ENCODE measurements at regions of chr3 and their contacts with region 1.

Region 1: DNA sequence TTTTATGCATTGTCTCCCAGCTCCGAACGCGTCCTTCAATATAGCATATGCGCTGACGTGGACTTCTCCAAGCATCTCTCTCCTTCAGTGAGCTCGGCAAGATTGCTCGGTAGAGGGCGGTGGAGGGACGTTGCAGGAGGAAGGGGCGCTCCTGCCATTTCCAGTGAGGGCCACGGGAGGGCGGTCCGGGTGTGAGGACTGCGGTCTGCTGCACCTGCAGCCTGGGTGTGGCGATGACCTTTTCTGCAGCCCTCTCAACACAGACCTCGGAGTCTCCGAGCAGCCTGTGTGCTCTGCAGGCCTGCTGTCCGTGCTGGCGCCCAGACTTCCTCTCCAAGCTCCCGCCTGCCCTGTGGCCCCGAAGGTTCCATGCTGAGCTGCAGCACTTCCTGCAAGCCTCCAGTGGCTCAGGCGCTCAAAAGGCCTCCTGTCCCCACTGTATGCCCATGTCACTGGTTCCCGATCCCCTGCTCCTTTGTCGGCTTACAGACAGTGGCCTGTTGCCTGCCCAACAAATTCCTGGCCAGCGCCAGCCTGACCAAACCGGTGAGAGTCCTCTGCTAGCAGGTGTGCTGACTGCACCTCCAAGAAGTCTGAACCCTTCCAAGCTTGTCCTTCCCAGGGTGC is 8.9 kb upstream of the RTP3 start:
- DNase-seq: peak; percentile 81 to 94 (median 85)
- H3K4me3 ChIP-seq: peak overlapping the region; percentile 23
- H3K4me3 Mint-ChIP-seq: peak overlapping the region in 6 of 7 donors; percentile 62 to 81 (median 69)
- H3K27ac ChIP-seq: no peak overlapping the region
- H3K27ac Mint-ChIP-seq: peak overlapping the region in 3 of 8 donors; percentile 40 to 73 (median 61)
- H3K4me1 ChIP-seq: peaks cover 12% of the 10 kb centered on the region
- H3K4me1 Mint-ChIP-seq: peaks cover 16 to 33% (median 23%) of the 10 kb centered on the region in 3 donors
- H3K27me3 ChIP-seq: no peaks in the 10 kb centered on the region
- H3K27me3 Mint-ChIP-seq: peaks cover 0 to 2% of the 10 kb centered on the region in 2 donors

Region 2: DNA sequence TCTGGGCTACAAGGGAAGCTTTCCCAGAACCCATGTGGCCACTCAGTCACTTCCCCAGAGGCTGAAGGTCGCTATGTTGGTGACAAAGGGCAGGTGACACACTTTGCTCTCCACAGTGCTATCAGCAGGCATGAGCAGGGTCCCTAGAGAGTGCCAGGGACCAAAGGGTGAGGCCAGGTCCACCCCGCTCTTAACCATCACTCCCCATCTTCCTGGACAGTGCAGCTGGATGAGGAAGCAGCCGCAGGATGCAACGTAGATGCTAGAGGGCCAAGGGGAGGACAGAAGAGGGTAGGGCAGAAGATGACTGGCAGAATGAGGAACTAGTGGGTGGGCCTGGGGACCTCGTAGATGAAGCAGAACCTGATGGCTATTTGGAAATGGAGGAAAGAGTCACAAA is 10.5 kb before region 1 on chr3:
- CTCF ChIA-PET with region 1: interaction called, 15 read pairs
- POLR2A ChIA-PET with region 1: no interaction called
- DNase-seq: no peak
- H3K4me3 ChIP-seq: no peak overlapping the region
- H3K4me3 Mint-ChIP-seq: no peak overlapping the region
- H3K27ac ChIP-seq: no peak overlapping the region
- H3K27ac Mint-ChIP-seq: no peak overlapping the region
- H3K4me1 ChIP-seq: no peaks in the 10 kb centered on the region
- H3K4me1 Mint-ChIP-seq: no peaks in the 10 kb centered on the region
- H3K27me3 ChIP-seq: no peaks in the 10 kb centered on the region
- H3K27me3 Mint-ChIP-seq: peaks cover 6 to 41% of the 10 kb centered on the region in 2 donors

Region 3: DNA sequence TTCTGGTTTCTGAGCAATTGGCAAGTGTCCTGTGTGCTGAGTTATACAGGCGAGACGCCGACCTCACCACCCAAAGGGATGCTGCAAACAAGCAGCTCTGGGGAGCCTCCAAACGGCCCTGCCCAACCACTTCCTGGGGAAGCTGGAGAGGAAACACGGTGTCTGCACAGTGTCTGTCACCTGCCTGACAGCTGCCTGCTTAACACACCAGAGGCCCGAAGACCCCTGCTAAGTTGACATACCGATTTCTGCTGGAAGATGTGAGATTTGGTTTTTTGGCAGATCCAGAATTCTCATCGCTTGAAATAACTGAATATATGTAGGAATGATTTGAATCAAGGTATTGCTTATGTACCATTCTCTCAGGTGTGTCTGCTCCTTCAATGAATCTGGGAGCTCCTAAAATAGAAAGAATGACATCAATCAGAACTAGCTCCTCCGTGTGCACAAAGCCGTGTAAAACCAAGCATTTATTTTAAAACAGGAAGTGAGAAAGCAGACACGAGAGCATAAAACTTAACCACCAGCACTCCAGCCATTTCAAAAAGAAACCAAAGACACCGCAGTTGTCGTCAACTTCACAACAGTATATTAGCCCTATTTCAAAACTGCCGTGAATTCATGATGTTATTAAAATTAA is 50.1 kb after region 1 on chr3:
- CTCF ChIA-PET with region 1: interaction called, 69 read pairs
- POLR2A ChIA-PET with region 1: interaction called, 14 read pairs
- DNase-seq: peak; percentile 79 to 96 (median 87)
- H3K4me3 ChIP-seq: peak overlapping the region; percentile 37
- H3K4me3 Mint-ChIP-seq: peak overlapping the region; percentile 57 to 79 (median 71)
- H3K27ac ChIP-seq: peak overlapping the region; percentile 58
- H3K27ac Mint-ChIP-seq: peak overlapping the region; percentile 85 to 99 (median 94)
- H3K4me1 ChIP-seq: peaks cover 44% of the 10 kb centered on the region
- H3K4me1 Mint-ChIP-seq: peaks cover 37 to 76% (median 71%) of the 10 kb centered on the region in 3 donors
- H3K27me3 ChIP-seq: no peaks in the 10 kb centered on the region
- H3K27me3 Mint-ChIP-seq: peaks cover 0 to 6% of the 10 kb centered on the region in 2 donors

Region 4: DNA sequence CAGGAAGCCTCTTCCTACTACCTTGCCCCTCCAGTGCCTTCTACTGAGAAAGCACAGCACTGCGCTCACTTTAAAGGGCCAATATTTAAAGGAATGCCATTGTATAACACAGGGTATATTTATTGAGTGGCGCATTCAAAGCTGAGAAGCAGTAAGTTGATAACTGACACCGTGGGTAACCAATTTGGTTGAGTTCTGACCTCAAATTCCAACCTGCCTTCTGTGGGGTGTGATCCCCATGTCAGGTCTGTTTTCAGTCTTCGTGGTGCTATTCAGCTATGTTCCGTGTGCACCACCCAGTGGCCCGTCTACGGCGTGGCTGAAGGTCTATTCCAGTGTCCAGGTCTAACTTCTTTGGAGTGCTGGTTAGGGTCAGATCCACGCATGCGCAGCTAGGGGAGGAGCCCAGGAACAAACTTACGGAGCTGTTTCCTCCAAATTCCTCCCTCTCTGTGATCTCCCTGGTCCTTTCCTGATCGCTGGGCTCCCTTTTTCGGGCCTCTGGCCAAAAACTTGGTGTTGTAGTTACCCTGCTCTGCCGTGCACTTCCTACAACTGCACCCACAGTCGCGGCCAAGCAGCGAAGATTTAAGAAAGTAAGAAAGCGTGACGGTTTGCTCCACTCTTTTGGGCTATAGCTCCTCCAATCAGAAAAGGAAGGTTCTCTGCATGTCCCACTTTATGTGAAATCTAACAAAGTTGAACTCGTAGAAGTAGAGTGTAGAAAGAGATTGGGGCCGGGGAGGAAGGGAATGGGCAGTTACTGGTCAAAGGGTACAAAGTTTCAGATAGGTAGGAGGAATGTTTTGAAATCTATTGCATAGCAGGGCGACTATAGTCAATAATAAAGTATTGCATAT is 69.6 kb after region 1 on chr3:
- CTCF ChIA-PET with region 1: interaction called, 214 read pairs
- POLR2A ChIA-PET with region 1: interaction called, 16 read pairs
- DNase-seq: peak; percentile 35 to 88 (median 68)
- H3K4me3 ChIP-seq: peak overlapping the region; percentile 56
- H3K4me3 Mint-ChIP-seq: peak overlapping the region; percentile 11 to 83 (median 71)
- H3K27ac ChIP-seq: no peak overlapping the region
- H3K27ac Mint-ChIP-seq: peak overlapping the region in 5 of 8 donors; percentile 21 to 54 (median 47)
- H3K4me1 ChIP-seq: peaks cover 11% of the 10 kb centered on the region
- H3K4me1 Mint-ChIP-seq: peaks cover 9 to 24% (median 24%) of the 10 kb centered on the region in 3 donors
- H3K27me3 ChIP-seq: no peaks in the 10 kb centered on the region
- H3K27me3 Mint-ChIP-seq: peaks cover 3 to 6% of the 10 kb centered on the region in 2 donors

Region 5: DNA sequence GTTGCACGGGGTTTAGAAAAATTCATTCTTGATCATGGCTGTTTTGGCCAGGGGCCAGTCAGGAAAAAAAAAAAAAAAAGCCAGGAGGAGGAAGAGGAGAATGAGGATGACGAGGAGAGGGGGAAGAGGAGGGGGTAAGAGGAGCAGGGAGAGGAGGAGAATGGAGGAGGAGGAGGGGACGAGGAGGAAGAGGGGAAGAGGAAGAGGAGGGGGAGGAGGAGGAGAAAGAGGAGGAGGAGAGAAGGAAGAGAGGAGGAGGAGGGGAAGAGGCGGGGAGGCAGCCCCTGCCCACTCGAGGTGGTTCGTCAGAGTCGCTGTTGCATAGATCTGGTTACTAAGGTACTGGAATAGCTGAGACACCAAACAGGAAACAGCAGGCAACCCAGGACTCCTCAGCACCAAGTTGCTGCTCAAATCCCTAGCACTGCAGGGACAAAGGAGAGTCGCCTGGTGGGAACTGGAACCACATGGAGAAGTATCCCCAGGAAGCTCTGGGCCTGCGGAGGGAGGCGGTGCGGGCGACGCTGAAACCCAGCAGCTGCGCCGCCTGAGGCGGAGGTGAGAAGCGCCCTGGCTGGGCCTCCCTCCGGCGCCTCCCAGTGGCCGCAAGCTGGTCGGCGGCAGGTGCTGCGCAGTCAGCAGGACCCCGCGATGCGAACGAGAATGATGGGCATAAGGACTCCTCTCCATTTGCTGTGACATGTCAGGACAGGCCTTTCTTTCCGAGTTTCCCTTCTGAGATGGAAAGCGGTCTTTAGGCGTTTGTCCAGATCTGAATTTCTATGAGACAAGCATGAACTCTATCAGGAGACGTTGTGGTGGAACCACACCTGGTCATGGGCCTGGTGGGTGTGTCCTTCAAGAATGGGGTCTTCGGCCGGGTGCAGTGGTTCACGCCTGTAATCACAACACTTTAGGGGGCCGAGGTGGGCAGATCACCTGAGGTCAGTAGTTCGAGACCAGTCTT is 141.0 kb after region 1 on chr3:
- CTCF ChIA-PET with region 1: interaction called, 147 read pairs
- POLR2A ChIA-PET with region 1: interaction called, 5 read pairs
- DNase-seq: peak; percentile 54 to 82 (median 71)
- H3K4me3 ChIP-seq: peak overlapping the region; percentile 33
- H3K4me3 Mint-ChIP-seq: peak overlapping the region in 6 of 7 donors; percentile 54 to 77 (median 65)
- H3K27ac ChIP-seq: no peak overlapping the region
- H3K27ac Mint-ChIP-seq: peak overlapping the region in 6 of 8 donors; percentile 41 to 92 (median 66)
- H3K4me1 ChIP-seq: peaks cover 16% of the 10 kb centered on the region
- H3K4me1 Mint-ChIP-seq: peaks cover 9 to 14% (median 12%) of the 10 kb centered on the region in 3 donors
- H3K27me3 ChIP-seq: no peaks in the 10 kb centered on the region
- H3K27me3 Mint-ChIP-seq: peaks cover 0 to 3% of the 10 kb centered on the region in 2 donors

Measured in CD8-positive, alpha-beta memory T cell (primary cell).